Activated CD4-positive, alpha-beta T cell treated with anti-CD3 and anti-CD28 coated beads, Interleukin-2, amount 10 ng/mL, durations not matched to agents 24 days and 14 days (primary cell): ENCODE measurements at regions of chr17 and their contacts with region 1.

Region 1: DNA sequence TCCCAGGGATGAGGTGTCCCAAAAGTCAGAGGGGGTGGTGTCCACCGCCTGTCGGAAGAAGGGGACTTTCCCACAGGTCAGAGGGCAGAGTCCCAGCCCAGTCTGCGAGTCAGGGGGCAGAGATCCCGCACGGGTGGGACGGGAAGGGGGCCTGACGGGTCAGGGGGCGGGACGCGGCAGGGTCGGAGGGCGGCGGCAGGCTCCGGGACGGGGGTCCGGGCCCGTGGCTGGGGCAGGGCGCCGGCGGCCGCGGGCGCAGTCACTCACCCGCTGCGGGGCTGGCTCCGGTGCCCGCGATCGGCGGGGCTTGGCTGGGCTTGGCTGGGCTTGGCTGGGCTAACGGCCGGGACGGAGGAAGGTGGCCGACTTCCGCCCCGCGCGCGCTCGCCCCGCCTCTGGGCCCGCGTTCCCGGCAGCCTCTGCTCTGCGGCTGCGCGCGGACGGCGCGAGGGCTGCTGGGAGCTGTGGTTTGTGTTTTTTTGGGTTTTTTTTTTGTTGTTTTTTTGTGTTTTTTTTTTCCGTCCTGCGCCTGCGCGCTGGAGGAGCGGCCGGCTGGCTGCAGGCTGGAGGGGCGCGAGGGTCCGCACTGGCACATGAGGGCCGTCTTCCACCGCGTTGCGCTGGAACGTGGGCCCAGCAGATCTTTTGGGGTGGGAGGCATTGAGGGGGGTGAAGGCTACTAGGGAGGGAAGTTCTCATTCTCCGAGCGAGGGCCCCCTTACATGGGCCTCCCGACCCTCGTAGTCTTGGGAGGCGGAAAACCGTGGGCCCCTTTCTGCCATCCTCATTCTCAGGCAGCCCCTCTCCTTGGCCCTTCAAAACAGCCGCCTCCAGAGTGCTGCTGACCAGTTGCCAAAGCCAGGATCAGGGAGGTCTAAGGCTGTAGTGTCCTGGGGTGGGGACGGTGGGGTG is at the start of gene CANT1:
- DNase-seq: peak; percentile 97
- H3K4me3 Mint-ChIP-seq: peak within 1 kb of the TSS; percentile 89
- H3K27ac Mint-ChIP-seq: peak within 1 kb of the TSS; percentile 92
- H3K4me1 Mint-ChIP-seq: peaks cover 51% of the 10 kb centered on the region
- H3K27me3 Mint-ChIP-seq: peaks cover 19% of the 10 kb centered on the region
- total RNA-seq, gene CANT1: 62.4 and 70.5 TPM in 2 replicates

Region 2: GRCh38 chr17:78962345-78962983 is 47.2 kb before region 1 on chr17:
- intact Hi-C with region 1: no loop called
- DNase-seq: no peak
- H3K4me3 Mint-ChIP-seq: no peak overlapping the region
- H3K27ac Mint-ChIP-seq: no peak overlapping the region
- H3K4me1 Mint-ChIP-seq: no peaks in the 10 kb centered on the region
- H3K27me3 Mint-ChIP-seq: no peaks in the 10 kb centered on the region

Region 3: GRCh38 chr17:79074650-79075445 is 65.2 kb after region 1 on chr17 and contains the start of gene ENGASE:
- intact Hi-C with region 1: loop called (anchors 5 kb)
- DNase-seq: peak; percentile 99
- H3K4me3 Mint-ChIP-seq: peak within 1 kb of the TSS; percentile 92
- H3K27ac Mint-ChIP-seq: peak within 1 kb of the TSS; percentile 88
- H3K4me1 Mint-ChIP-seq: peaks cover 12% of the 10 kb centered on the region
- H3K27me3 Mint-ChIP-seq: peaks cover 5% of the 10 kb centered on the region
- total RNA-seq, gene ENGASE: 49.5 and 52.4 TPM in 2 replicates